ENCODE measurements at regions of chr2 and their contacts with region 1.

Region 1: DNA sequence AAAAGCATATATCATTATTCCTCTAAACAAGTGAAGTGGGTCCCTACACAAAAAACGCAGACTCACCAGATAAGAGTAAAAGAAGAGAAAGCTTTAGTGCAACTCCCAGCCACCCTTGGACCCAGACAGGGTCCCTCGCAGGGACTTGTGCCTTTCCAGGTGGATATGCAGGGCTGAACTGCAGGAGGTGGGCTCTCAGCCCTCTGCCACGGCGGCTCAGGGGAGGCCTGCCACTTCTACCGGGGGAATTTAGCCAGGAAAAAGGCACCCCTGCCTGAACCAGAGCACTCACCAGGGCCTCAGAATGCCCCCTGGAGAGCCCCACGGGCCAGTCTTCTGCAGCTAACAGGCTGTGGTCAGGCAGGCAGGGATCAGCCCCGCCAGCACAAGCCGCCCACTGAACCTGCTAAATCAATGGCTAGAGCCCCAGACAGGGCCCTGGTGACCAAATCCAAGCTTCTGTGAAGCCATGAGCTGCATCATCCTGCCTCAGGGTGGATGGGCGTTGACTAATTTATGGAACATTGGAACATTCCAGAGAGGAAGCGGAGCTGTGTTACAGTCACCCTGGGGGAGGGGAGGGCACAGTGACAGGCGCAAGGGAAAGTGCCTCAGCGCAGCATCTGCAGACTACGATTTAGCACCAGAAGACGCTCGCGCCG is 209.3 kb downstream of the EIPR1 start:
- DNase-seq: no peak
- H3K4me3 Mint-ChIP-seq: no peak overlapping the region
- H3K27ac Mint-ChIP-seq: no peak overlapping the region
- H3K4me1 Mint-ChIP-seq: no peaks in the 10 kb centered on the region
- H3K27me3 Mint-ChIP-seq: no peaks in the 10 kb centered on the region

Region 2: GRCh38 chr2:3149441-3150217 is 18.7 kb before region 1 on chr2:
- intact Hi-C with region 1: loop called (anchors 1 kb)
- DNase-seq: no peak
- H3K4me3 Mint-ChIP-seq: no peak overlapping the region
- H3K27ac Mint-ChIP-seq: no peak overlapping the region
- H3K4me1 Mint-ChIP-seq: peaks cover 4% of the 10 kb centered on the region
- H3K27me3 Mint-ChIP-seq: no peaks in the 10 kb centered on the region

Region 3: DNA sequence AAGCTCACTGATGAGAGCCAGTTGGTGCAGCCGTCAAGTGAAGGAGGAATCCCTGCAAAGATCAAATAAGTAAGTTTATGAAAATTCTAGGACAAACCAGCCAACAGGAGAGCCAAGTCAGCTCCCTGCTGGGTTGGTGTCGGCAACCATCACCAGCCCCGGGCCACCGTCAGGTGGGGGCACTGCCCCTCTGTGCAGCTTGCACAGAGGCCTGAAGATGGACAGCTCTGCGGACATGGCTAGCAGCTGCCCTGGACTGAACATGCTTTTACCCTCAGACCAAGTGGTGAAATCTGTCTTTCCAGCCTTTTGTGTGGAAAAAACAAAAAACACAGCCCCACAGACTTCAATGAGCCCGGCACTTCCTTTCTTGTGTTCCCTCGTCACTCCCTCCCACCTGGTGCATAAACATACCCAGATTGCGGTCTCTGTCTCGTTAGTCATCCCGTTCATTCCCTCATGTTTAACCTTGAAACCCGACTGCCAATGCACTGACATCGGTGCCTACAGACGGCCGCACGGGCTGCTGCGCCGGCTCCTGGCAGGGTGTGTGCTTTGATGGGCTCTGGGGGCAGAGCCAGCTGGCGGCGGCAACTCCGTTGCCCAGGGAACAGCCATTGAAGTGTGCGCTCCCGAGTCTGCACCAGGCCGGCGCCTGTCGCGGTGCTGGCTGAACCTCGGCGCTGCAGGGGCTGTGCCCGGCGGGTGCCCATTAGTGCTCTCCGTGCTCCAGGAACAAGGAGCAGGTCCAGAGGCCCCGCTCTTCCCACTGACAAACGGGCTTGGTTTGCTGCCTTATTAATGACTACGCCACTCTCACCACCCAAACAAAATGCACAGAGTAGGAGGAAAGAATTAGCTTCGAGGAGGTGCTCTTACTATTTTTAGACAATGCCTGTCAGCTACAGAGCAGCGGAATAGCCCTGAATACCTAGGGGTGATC is 114.0 kb after region 1 on chr2:
- intact Hi-C with region 1: no loop called
- DNase-seq: no peak
- H3K4me3 Mint-ChIP-seq: no peak overlapping the region
- H3K27ac Mint-ChIP-seq: peak overlapping the region; percentile 52
- H3K4me1 Mint-ChIP-seq: peaks cover 4% of the 10 kb centered on the region
- H3K27me3 Mint-ChIP-seq: no peaks in the 10 kb centered on the region

Measured in activated T-helper 1 cell treated with anti-CD3 and anti-CD28 coated beads, Interleukin-12 subunit alpha, Interleukin-12 subunit beta, Interleukin-2, Interleukin-4 antibody, amounts not matched to agents 30 ng/mL and 10 ng/mL and 1 ng/mL, durations not matched to agents 14 hours and 24 hours and 36 hours (primary cell).